BJ (cell line): ENCODE measurements at regions of chr12 and their contacts with region 1.

Region 1: DNA sequence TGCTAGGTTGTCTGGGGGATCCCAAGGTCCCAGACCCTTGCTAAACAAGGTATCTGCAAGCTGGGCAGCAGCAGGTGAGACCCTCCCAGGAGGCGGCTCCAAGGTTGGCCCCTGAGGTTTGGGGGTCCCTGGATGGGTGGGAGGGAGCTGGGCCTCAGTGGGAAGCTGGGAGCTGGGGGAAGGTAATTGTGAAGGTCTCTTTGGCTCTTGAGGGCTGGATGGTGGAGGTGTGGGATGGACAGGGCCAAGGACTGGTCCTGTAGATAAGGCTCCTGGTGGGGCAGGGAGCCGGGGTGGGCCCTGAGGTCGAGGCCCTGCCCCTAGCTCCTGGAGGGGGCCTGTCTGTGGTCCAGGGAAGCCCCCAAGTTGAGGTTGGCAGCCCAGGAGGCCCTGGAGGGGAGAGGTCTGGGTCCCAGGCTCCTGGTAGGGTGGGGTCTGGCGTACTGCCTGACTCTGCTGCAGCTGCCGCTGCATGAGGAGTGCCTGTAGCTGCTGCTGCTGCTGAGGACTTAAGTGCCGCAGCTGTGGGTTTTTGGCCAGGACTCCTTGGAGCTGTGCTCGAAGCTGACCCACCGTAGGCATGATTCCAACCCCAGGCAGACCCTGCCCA is 13.1 kb upstream of the PRKAG1 start:
- DNase-seq: no peak
- H3K4me3 ChIP-seq: no peak overlapping the region
- H3K27me3 ChIP-seq: no peaks in the 10 kb centered on the region
- CTCF ChIP-seq: no peak

Region 2: DNA sequence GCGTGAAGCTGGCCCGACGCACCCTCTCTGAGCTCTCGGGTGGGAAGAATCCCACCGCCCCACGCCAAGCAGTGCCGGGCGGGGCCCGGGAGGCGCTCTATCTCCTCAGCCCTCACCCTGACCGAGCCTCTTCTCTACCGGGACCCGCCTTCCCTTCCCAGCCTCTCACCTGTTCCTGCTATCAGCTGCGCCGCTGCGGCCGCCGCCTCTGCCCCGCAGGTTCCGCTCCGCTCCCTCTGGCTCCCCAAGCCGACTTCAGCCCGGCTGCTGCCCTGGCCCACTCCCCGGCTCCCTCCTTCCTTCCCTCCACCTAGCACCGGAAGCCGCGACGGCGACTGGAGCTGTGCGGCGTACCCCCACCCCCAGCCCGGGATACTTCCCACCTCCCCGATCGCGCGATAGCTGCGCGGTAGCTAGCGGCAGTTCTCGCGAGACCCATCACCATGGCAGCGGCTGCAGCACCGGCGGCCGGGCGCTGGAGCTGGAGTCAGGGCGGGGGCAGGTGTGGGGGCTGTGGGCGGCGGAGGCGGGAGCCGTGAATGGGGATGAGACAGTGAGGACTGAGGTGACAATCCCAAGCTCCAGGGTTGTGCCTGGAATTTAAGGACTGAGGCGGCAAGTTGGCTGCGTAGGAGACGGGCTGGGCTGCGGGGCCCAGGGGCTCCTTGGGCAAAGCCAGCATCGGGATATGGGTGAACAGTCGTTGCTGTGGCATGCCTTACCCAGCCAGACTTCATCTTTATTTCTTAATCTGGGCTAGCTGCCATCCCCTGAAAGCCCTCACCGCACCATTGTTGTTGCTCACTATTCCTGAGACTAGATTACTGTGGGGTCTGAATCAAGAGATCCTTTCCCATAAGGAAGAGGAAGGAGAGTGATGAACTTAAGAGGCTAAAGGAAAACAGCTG is 74.3 kb before region 1 on chr12 and contains the start of gene ARF3:
- CTCF ChIA-PET with region 1: no interaction called
- POLR2A ChIA-PET with region 1: no interaction called
- DNase-seq: peak; percentile 45
- H3K4me3 ChIP-seq: peak within 1 kb of the TSS; percentile 88
- H3K27me3 ChIP-seq: no peaks in the 10 kb centered on the region
- CTCF ChIP-seq: 0 out of 2 replicates have a peak, but pooled peaks have one; percentile 0
- polyA plus RNA-seq, gene ARF3: 233 and 292 TPM in 2 replicates

Region 3: DNA sequence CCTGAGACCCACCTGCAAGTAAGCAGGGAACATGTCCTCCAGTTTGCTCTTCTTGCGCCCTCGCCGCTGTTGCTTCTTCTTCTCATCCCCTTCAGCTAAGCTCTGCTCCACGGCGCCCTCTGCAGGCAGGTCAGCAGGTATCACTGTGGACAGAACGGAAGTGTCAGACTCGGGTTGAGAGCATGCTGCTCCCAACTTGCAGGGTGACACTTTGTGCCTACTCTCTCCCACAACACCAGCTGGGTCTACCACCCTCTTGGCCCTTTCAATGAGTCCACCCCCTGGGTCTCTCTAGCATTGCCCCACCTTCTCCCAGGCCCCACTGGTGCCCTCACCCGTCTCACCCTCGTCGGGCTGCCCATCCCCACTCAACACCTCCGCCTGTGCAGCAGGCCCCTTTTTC is 12.2 kb after region 1 on chr12:
- CTCF ChIA-PET with region 1: interaction called, 33 read pairs
- POLR2A ChIA-PET with region 1: no interaction called
- DNase-seq: no peak
- H3K4me3 ChIP-seq: no peak overlapping the region
- H3K27me3 ChIP-seq: no peaks in the 10 kb centered on the region
- CTCF ChIP-seq: peak; percentile 81